SK-N-SH (cell line): ENCODE measurements at regions of chr9 and their contacts with region 1.

Region 1: GRCh38 chr9:111037381-111038305 is 627 bp downstream of the LPAR1 start:
- DNase-seq: peak; percentile 86
- H3K4me3 ChIP-seq: peak overlapping the region; percentile 68 to 72
- H3K27ac ChIP-seq: no peak overlapping the region
- H3K4me1 ChIP-seq: peaks cover 11 to 16% of the 10 kb centered on the region in 2 experiments; a peak in 3 of 4 replicates
- H3K27me3 ChIP-seq: no peaks in the 10 kb centered on the region
- CTCF ChIP-seq: peak; percentile 24; the same call in 1 of the 2 replicates
- EP300 ChIP-seq: no peak
- RAD21 ChIP-seq: peak; percentile 55

Region 2: DNA sequence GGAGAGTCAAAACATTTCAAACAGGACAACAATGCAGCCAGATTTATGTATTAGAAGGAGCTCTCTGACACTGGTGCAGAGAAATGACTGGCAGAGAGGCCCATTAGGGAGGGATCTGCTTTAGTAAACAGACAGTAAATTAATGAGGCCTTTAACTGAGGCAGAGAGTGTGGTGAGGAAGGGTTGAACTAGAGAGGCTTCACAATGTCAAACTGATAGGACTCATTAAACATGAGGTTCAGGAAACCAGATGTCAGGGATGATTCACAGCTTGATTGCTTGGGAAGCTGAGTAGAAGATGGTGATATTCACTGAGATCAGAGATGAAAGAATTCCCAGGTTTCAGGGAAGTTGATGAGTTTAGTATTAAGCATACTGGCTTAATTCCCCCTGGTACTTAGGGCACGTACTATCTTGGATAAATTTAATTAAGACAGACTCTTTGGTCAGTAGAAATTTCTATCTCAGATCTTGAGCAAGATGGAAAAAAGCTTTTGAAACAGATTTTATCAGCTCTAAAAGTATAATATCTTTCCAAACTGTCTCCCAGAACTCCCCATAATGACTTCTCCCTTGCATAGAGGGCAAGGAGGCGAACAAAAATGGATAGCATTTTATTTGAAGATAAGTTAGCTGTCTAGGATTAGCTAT is 377.6 kb before region 1 on chr9:
- CTCF ChIA-PET with region 1: interaction called, 11 read pairs
- POLR2A ChIA-PET with region 1: no interaction called
- DNase-seq: peak; percentile 32
- H3K4me3 ChIP-seq: no peak overlapping the region
- H3K27ac ChIP-seq: peak overlapping the region; percentile 75 to 80
- H3K4me1 ChIP-seq: peaks cover 0 to 3% of the 10 kb centered on the region in 2 experiments; a peak in 1 of 4 replicates
- H3K27me3 ChIP-seq: no peaks in the 10 kb centered on the region
- CTCF ChIP-seq: no peak
- EP300 ChIP-seq: peak; percentile 90 to 96
- RAD21 ChIP-seq: no peak

Region 3: DNA sequence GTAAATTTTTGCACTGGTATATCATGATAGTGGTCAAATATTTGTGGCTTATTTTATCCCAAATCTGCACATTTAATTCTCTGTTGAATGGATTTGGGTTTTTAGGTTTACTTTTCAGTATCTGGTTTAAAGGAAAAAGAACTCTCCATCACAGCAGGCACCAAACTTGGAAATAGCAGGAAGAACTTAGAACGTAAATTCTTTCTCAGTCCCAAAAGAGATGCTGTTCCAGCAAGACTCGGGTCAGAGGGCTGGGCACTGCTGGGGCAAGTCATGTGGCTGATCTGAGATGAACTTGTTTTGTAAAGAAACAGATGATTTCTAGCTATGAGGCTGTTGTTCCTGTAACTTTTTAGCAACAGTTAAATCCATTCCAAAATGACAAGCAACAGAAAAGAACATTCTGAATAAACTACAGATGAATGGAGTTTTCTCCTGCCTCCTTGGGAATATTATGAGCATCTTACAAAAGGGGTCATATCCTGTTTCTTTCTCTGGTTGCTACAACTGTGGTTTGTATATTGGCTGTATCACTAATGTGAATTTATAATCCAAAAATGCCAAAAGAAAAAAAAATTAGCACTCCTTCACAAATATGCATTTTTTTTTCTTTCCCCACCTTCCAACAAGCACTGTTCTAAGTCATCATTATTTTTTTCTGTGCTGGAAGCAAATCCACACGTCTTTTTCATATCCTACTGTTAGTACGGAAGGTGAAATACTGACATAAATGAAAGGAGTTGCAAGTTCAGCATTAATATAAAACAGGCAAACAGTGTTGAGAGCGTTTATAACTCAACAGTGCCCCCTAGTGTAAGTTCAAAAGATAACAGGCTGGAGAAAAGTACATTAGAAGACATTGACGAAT is 261.3 kb after region 1 on chr9:
- CTCF ChIA-PET with region 1: interaction called, 22 read pairs
- POLR2A ChIA-PET with region 1: no interaction called
- DNase-seq: peak; percentile 42
- H3K4me3 ChIP-seq: peak overlapping the region in 1 of 2 experiments; percentile 42; a peak in 1 of 4 replicates
- H3K27ac ChIP-seq: peak overlapping the region in 1 of 2 experiments; percentile 39; a peak in 1 of 4 replicates
- H3K4me1 ChIP-seq: peaks cover 0 to 3% of the 10 kb centered on the region in 2 experiments; a peak in 2 of 4 replicates
- H3K27me3 ChIP-seq: no peaks in the 10 kb centered on the region
- CTCF ChIP-seq: peak; percentile 87
- EP300 ChIP-seq: no peak
- RAD21 ChIP-seq: peak; percentile 98